WTC11 (cell line): ENCODE measurements at regions of chr2 and their contacts with region 1.

Region 1: GRCh38 chr2:9398881-9399780 is 24.2 kb downstream of the ITGB1BP1 start:
- DNase-seq: no peak
- ATAC-seq: no peak
- H3K4me3 Mint-ChIP-seq: no peak overlapping the region
- H3K27ac Mint-ChIP-seq: no peak overlapping the region; the same call in 1 of the 2 replicates
- H3K4me1 Mint-ChIP-seq: peaks cover 11% of the 10 kb centered on the region
- H3K27me3 Mint-ChIP-seq: no peaks in the 10 kb centered on the region
- CTCF ChIP-seq: no peak

Region 2: DNA sequence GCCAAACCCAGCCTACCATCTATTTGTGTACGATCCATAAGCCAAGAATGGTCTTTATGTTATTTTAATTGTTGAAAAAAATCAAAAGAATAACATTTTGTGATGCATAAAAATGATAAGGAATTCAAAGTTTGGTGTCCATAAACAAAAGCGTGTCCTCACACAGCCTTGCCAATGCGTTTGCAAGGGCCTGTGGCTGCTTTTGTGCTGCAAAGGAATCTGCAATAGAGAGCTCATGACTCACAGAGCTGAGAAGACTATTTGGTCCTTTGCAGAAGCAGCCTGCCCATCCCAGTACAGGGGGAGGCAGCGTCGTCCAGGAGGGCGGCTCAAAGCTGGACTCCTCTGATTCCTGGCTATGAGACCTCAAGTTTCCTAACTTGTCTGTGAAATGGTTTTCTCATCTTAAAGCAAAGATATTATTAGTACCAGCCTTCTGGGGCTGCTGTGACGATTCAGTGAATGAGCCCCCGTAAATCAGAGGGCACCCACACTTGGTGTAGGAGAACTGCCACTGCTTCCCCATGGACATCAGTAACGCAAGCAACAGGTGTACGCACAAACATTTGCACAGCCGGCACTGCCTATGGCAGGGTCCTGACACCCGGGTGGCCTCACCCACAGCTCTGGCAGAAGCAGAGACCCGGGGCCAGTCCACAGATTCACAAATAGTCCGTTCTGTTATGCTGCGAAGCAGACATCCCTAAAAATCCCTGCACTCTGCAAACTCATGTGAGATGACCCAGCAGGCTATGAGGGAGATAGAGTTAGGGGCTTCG is 263.2 kb before region 1 on chr2:
- CTCF ChIA-PET with region 1: interaction called, 10 read pairs
- POLR2A ChIA-PET with region 1: no interaction called
- DNase-seq: no peak
- ATAC-seq: no peak
- H3K4me3 Mint-ChIP-seq: no peak overlapping the region
- H3K27ac Mint-ChIP-seq: no peak overlapping the region
- H3K4me1 Mint-ChIP-seq: peaks cover 16% of the 10 kb centered on the region
- H3K27me3 Mint-ChIP-seq: peaks cover 19% of the 10 kb centered on the region
- CTCF ChIP-seq: no peak

Region 3: GRCh38 chr2:9378433-9379390 is 20.4 kb before region 1 on chr2:
- CTCF ChIA-PET with region 1: no interaction called
- POLR2A ChIA-PET with region 1: no interaction called
- DNase-seq: no peak
- ATAC-seq: peak; percentile 72
- H3K4me3 Mint-ChIP-seq: no peak overlapping the region
- H3K27ac Mint-ChIP-seq: peak overlapping the region; percentile 63
- H3K4me1 Mint-ChIP-seq: peaks cover 26% of the 10 kb centered on the region
- H3K27me3 Mint-ChIP-seq: no peaks in the 10 kb centered on the region
- CTCF ChIP-seq: no peak

Region 4: DNA sequence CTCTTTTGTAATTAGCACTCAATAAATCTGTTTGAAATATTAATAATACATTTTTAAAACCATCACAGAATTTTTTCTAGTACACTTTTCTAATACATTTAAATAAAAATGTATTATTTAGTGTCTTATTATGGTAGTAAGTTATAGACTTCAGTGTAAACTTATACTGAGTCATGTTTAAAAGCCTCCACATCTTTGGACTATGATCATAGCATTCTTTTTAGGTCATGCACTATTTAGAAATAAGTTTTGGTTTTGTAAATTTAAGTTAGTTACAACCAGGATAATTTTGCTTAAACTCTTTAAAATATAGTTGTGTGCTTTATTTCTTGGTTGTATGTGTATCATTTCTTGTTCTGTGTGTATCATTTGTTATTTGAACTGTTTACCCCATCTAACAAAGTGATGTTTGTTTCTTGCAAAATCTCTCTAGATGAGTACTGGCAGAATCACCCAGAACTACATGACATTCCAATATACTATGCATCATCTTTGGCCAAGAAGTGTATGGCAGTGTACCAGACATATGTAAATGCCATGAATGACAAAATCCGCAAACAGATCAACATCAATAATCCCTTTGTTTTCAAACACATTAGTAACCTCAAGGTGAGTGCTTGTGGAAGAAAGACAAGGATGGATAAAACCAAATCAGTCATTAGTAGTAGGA is 41.1 kb after region 1 on chr2:
- CTCF ChIA-PET with region 1: no interaction called
- POLR2A ChIA-PET with region 1: no interaction called
- DNase-seq: no peak
- ATAC-seq: no peak
- H3K4me3 Mint-ChIP-seq: no peak overlapping the region
- H3K27ac Mint-ChIP-seq: no peak overlapping the region
- H3K4me1 Mint-ChIP-seq: no peaks in the 10 kb centered on the region
- H3K27me3 Mint-ChIP-seq: no peaks in the 10 kb centered on the region
- CTCF ChIP-seq: no peak